B cell (primary cell): ENCODE measurements at regions of chr1 and their contacts with region 1.

Region 1: DNA sequence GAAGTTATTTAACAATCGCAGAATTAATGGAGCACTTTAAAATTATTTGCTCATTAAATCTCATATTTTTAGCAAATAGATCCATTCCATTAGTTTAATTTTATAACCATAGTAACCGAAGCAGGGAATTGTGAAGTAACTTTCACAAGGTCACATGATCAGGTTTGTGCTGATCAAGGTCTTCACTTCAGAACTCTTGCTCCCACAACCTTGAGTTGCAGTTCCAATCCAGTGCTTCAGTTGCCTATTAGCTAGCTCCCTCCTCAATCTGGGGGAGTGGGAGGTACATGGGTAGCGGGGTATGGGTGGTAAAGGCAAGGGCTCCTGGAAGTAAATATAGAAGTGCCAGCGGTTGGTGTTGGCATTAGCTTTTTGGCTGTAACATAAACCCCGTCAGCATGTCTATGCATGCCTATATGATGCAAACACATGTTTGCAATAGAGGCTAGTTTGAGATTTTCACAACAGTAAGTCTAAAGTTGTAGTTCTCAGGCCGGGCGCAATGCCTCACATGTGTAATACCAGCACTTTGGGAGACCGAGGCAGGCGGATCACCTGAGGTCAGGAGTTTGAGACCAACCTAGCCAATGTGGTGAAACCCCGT is 5.8 kb downstream of the ATP5IF1 start:
- DNase-seq: no peak
- ATAC-seq: no peak
- H3K4me3 ChIP-seq: no peak overlapping the region
- H3K4me3 Mint-ChIP-seq: no peak overlapping the region
- H3K27ac ChIP-seq: no peak overlapping the region
- H3K27ac Mint-ChIP-seq: no peak overlapping the region
- H3K4me1 ChIP-seq: peaks cover 30 to 43% of the 10 kb centered on the region in 2 donors
- H3K4me1 Mint-ChIP-seq: peaks cover 32% of the 10 kb centered on the region
- H3K27me3 ChIP-seq: no peaks in the 10 kb centered on the region
- H3K27me3 Mint-ChIP-seq: no peaks in the 10 kb centered on the region
- CTCF ChIP-seq: no peak

Region 2: DNA sequence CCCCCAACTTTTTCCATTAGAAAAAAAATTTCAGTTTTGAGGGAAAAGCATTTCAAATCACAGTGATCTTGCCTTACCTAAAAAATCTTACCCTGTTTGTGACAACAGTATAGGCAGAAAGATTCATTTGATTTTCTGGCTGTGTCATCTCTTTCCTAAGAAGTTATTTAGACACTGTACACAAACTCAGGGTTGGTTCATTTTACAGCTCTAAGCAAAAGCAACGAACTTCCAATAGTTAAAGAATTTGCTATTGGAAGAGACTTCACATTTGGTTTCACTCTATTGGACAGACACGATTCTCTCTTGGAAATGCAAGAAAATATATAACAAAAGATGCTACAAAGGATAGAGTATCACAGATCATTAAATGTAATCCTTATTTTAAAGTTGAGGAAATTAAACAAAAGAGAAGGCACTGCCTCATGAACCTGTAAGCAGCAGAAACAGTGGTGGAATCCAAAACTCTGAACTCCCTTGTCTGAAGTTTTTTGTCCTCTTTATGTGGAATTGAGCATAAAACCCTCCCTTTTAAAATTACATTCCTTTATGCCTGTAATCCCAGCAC is 174.1 kb before region 1 on chr1:
- CTCF ChIA-PET with region 1: no interaction called
- POLR2A ChIA-PET with region 1: interaction called, 10 read pairs
- intact Hi-C with region 1: no loop called
- DNase-seq: no peak
- ATAC-seq: no peak
- H3K4me3 ChIP-seq: no peak overlapping the region
- H3K4me3 Mint-ChIP-seq: no peak overlapping the region
- H3K27ac ChIP-seq: no peak overlapping the region
- H3K27ac Mint-ChIP-seq: peak overlapping the region; percentile 17
- H3K4me1 ChIP-seq: peaks cover 12 to 13% of the 10 kb centered on the region in 2 donors
- H3K4me1 Mint-ChIP-seq: peaks cover 40% of the 10 kb centered on the region
- H3K27me3 ChIP-seq: no peaks in the 10 kb centered on the region
- H3K27me3 Mint-ChIP-seq: no peaks in the 10 kb centered on the region
- CTCF ChIP-seq: no peak

Region 3: GRCh38 chr1:28395181-28395580 is 153.4 kb after region 1 on chr1:
- CTCF ChIA-PET with region 1: no interaction called
- POLR2A ChIA-PET with region 1: no interaction called
- intact Hi-C with region 1: no loop called
- DNase-seq: no peak
- ATAC-seq: no peak
- H3K4me3 ChIP-seq: no peak overlapping the region
- H3K4me3 Mint-ChIP-seq: no peak overlapping the region
- H3K27ac ChIP-seq: no peak overlapping the region
- H3K27ac Mint-ChIP-seq: peak overlapping the region; percentile 46
- H3K4me1 ChIP-seq: no peaks in the 10 kb centered on the region
- H3K4me1 Mint-ChIP-seq: no peaks in the 10 kb centered on the region
- H3K27me3 ChIP-seq: no peaks in the 10 kb centered on the region
- H3K27me3 Mint-ChIP-seq: no peaks in the 10 kb centered on the region
- CTCF ChIP-seq: no peak